AG04449 (cell line): ENCODE measurements at regions of chr14 and their contacts with region 1.

Region 1: DNA sequence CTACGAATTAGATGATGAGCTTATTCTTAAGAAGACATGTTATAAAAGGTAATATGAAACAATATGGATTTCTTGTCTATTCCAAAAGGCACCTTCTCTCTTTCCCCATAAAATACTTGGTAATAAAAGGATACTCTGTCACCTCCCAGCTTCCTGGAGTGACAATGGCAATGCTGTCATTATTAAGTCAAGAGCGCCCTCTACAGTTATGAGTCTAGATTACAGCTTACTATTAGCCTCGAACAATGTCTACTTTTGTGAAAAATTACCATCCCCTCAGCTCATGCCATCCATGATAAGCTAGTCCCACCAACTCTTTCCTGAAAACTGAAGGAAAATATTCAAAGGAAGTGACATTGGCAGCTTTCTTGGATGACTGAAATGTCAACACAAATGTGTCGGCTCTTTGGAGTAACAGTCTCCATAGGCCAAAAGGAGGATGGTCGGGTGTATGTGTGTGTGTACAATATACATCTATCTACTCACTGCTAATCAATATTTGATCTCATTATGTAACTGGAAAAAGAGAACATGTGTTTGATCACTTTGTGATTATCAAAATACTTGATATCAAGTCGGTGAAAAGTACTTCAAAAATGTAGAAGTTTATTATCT is 48.7 kb upstream of the CDKN3 start:
- DNase-seq: no peak
- H3K4me3 ChIP-seq: no peak overlapping the region
- CTCF ChIP-seq: peak; percentile 51

Region 2: DNA sequence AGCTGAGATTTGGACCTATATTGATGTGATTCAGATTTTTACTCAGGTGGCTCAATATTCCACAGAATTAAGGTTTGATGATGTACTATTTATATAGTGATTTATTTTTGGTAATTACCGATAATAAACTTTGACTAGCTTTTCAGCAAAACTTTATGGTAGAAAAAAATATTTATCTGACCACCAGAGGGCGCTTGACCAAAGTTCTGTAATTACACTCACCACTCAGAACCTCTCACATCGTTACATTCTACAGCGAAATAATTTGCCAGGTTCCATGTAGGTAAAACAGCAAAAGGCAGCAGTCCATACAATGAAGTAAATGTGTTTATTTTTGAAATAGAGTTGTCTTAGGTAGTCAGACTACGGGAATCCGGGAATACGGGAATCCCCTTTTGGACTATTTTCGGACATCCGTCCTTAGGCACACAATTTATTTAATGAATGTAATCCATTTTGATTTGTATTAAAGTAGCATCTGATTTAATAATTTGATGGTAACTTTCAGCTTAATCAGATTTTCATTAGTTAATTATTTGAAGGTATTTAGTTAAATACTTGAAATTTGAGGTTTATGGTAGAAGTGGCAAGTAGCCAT is 1052.0 kb before region 1 on chr14:
- CTCF ChIA-PET with region 1: interaction called, 86 read pairs
- POLR2A ChIA-PET with region 1: no interaction called
- DNase-seq: no peak
- H3K4me3 ChIP-seq: no peak overlapping the region
- CTCF ChIP-seq: peak; percentile 29

Region 3: DNA sequence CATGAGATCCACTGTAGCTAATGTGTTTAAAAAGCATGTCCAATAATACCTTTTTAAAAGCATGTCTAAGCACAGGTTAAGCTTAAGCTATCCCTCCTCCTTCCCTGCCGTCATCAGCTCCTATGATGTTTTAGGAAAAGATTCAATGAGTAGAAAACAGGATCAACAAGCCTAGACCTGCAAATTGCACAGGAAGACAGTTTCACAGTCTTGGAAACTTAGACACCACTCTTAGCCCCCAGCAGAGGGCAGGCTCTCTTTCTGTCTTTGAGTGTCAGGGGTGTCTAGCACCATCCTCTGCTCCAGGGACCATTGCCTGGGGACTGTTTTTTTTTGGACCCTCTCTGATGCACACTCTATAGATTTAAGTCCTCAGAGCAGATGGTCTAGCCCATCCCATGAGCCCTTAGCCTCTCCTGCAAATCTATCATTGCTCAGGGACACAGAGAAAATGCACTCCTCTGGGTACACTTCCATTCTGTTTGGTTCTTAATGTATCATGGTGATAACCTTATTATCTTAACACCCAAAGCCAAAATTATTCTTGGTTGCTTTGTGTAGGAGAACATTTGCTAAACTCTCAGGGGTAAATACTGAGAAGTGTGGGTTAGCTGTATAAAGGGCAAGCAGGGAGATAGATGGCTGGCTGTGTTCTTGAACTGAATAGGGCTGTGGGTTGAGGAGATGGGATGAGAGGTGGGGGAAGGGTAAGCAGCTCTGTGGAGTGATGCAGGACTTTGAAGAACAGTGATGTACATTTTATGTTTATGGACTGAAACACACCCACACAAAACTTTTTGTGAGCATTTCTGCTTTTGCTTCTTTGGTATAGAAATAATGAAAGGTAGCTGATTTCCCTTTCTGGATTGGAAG is 935.1 kb before region 1 on chr14:
- CTCF ChIA-PET with region 1: interaction called, 32 read pairs
- POLR2A ChIA-PET with region 1: no interaction called
- DNase-seq: no peak
- H3K4me3 ChIP-seq: no peak overlapping the region
- CTCF ChIP-seq: peak; percentile 49

Region 4: DNA sequence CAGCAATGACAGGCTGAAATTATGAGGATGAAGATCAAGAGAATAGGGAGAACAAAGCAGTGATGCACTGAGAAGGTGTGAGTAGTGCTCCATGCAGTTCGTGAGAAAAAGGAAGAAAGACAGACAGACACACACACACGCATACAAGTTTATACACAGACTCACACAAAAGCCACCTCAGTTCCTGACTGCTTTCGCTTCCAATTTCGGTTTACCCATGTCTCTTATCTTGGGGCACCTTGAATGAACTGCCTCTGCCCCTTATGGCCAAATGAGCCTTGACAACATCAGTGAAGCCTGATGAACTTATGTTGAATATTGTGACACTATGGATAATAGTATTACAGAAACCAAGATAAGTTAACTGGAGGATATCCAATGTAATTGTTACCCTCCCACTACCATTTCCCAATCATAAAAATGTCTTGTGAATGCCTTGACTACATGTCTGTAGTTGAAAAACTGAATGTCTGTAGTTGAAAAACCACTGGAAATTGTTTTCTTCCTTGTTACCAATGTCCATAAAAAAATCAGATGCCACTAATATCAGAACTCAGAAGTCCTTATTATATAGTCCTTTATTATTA is 814.6 kb before region 1 on chr14:
- CTCF ChIA-PET with region 1: interaction called, 53 read pairs
- POLR2A ChIA-PET with region 1: no interaction called
- DNase-seq: no peak
- H3K4me3 ChIP-seq: no peak overlapping the region
- CTCF ChIP-seq: no peak

Region 5: GRCh38 chr14:53547593-53547992 is 800.5 kb before region 1 on chr14:
- CTCF ChIA-PET with region 1: interaction called, 10 read pairs
- POLR2A ChIA-PET with region 1: no interaction called
- DNase-seq: no peak
- H3K4me3 ChIP-seq: no peak overlapping the region
- CTCF ChIP-seq: no peak

Region 6: DNA sequence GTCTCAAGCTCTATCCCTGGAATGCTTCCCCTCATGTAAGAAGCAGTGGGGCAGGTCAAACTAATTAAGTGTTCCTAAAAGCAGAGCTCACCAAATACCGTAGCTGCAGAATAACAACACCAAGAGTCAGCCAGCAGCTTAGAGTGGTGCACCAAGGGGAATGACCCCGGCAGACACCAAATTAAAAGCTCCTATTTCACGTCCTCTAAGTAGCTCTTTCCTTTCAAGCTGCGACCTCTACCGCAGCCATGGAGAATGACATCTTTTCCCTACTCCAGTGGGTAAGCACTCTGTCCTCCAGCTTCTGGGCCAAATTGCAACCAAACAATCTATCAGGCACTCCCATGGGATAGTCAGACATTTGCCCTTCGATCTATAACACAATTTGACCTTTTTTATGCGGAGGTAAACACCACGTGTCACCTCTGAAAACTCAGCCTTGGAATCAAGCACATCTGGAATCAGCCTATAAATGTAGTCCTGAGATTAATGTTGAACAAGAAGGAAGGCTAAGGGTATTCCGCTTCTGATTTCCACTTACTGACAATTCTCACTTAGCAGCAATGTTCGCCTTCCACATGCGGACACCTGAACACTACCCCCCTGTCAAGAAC is 18.9 kb before region 1 on chr14:
- CTCF ChIA-PET with region 1: interaction called, 12 read pairs
- POLR2A ChIA-PET with region 1: no interaction called
- DNase-seq: peak; percentile 16
- H3K4me3 ChIP-seq: no peak overlapping the region
- CTCF ChIP-seq: peak; percentile 77